ENCODE measurements at regions of chr19 and their contacts with region 1.

Region 1: GRCh38 chr19:50695251-50696093 is 24.1 kb downstream of the SHANK1 start:
- DNase-seq: peak; percentile 97
- H3K4me3 ChIP-seq: peak overlapping the region in 1 of 2 experiments; percentile 43; a peak in 2 of 4 replicates
- H3K27ac ChIP-seq: peak overlapping the region in 1 of 2 experiments; percentile 90; a peak in 2 of 4 replicates
- H3K4me1 ChIP-seq: peaks cover 0 to 8% of the 10 kb centered on the region in 2 experiments; a peak in 1 of 4 replicates
- H3K27me3 ChIP-seq: peaks cover 19% of the 10 kb centered on the region
- CTCF ChIP-seq: no peak
- EP300 ChIP-seq: no peak
- RAD21 ChIP-seq: no peak

Region 2: DNA sequence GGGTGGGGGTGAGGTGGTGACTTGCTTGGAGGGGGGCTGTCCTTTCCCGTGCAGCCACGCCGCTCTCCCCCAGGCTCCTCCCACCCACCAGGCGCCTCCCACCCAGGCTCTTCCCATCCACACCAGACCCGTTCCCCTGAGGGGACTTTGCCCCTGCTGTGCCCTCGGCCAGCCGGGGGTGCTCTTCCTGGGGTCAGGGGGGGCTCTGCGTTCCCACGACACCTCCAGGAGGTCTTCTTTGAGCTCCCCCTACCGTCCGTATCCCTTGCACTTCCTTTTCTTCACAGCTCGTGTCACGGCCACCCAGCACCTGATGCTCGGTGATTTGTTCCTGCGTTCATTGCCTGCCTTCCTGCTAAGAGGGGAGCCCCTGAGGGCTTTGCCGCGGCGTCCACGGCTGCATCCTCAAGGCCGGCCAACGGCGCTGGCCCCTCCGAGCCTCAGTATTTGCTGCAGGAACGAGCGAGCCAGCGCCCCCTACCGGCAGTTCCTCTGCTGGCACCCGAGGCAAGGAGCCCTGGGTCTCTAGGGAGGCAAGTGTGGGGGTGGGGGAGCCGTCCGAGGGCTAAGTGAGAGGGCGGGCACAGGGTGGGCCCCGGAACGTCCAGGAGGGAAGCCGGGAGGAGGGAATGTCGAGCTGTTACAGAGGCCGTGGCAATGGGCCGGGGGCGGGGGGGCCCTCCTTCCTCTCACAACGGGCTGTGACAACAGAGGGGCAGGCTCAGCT is 139.0 kb before region 1 on chr19:
- CTCF ChIA-PET with region 1: no interaction called
- POLR2A ChIA-PET with region 1: no interaction called
- DNase-seq: peak; percentile 96
- H3K4me3 ChIP-seq: peak overlapping the region; percentile 56 to 60
- H3K27ac ChIP-seq: peak overlapping the region in 1 of 2 experiments; percentile 59; a peak in 1 of 4 replicates
- H3K4me1 ChIP-seq: peaks cover 0 to 20% of the 10 kb centered on the region in 2 experiments; a peak in 1 of 4 replicates
- H3K27me3 ChIP-seq: no peaks in the 10 kb centered on the region
- CTCF ChIP-seq: peak; percentile 98
- EP300 ChIP-seq: no peak
- RAD21 ChIP-seq: peak; percentile 44

Region 3: DNA sequence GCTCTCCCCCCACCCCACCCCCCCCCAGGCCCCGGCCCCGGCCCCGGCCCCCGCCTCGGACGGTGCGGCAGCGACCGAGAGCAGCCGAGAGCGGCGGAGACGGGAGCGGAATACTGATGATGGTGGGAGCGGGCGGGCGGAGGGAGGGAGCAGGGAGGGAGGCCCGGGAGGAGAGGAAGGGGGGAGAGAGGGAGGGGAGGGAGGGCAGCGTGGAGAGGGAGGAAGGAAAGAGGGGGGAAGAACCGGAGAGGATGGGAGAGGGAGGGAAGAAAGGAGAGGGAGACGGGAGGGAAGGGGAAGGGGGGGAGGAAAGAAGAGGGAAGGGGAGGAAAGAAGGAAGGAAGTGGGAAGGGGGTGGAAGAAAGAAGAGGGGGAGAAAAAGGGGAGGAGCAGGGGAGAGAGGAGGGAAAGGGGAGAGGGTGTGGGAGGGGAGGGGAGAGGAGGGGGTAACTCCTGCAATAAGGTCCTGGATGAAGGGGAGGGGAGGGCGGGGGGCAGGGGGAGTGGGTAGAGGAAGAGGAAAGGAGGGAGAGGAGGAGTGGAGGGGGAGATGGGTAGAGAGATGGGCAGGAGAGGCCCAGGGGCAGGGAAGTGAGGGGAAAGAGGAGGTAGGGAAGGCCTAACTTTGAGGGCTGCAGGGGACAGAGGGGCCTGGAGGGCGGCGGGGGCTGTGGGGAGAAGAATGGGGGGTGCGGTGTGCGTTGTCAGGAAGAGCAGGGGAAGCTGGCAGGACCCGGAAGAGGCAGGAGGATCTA is 127.0 kb before region 1 on chr19 and contains the start of gene LRRC4B:
- CTCF ChIA-PET with region 1: no interaction called
- POLR2A ChIA-PET with region 1: no interaction called
- DNase-seq: peak; percentile 93
- H3K4me3 ChIP-seq: peak within 1 kb of the TSS; percentile 54 to 55; a peak in 3 of 4 replicates
- H3K27ac ChIP-seq: peak within 1 kb of the TSS in 1 of 2 experiments; percentile 71; a peak in 2 of 4 replicates
- H3K4me1 ChIP-seq: peaks cover 0 to 14% of the 10 kb centered on the region in 2 experiments; a peak in 1 of 4 replicates
- H3K27me3 ChIP-seq: no peaks in the 10 kb centered on the region
- CTCF ChIP-seq: no peak
- EP300 ChIP-seq: no peak
- RAD21 ChIP-seq: no peak
- polyA plus RNA-seq, gene LRRC4B: 5.4 and 6.9 TPM in 2 replicates

Region 4: DNA sequence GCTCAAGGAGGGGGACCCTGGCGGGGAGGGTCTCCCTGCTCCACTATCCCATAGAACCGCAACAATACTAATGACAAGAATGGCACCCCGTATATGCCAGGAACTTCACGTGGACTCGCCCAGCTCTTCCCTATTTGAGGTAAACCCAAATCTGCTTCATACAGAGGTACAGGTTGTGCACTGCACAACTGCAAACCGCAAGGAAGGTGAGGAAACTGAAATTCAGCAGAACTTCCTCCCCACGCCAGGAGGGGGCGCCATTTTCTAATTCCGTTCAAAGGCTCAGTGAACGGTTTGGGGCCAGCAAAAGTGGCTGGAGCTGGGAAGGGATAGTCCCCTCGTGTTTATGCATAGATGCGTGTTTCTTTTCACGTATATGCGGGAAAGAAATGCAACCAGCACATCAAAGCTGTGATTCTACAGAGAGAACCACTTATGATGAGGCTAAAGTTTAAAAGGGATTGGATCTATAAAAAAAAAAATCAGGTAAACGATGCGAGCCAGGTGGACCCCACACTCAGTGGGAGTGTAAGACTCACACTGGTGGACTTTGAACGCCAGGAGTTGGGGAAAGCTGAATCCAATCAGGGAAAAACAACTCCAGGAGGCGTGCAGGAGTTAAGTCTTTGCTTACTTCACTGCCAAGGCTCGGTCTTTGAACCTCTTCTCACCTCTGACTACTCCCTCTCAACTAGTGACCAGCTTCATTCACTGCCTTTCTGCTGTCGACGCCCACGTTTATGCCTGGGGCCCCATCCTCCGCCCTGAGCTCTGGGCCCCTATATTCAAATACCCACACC is 26.0 kb before region 1 on chr19:
- CTCF ChIA-PET with region 1: interaction called, 15 read pairs
- POLR2A ChIA-PET with region 1: interaction called, 3 read pairs
- DNase-seq: peak; percentile 78
- H3K4me3 ChIP-seq: no peak overlapping the region
- H3K27ac ChIP-seq: no peak overlapping the region
- H3K4me1 ChIP-seq: no peaks in the 10 kb centered on the region
- H3K27me3 ChIP-seq: no peaks in the 10 kb centered on the region
- CTCF ChIP-seq: peak; percentile 87
- EP300 ChIP-seq: no peak
- RAD21 ChIP-seq: peak; percentile 60